ENCODE measurements at regions of chr5 and their contacts with region 1.

Region 1: DNA sequence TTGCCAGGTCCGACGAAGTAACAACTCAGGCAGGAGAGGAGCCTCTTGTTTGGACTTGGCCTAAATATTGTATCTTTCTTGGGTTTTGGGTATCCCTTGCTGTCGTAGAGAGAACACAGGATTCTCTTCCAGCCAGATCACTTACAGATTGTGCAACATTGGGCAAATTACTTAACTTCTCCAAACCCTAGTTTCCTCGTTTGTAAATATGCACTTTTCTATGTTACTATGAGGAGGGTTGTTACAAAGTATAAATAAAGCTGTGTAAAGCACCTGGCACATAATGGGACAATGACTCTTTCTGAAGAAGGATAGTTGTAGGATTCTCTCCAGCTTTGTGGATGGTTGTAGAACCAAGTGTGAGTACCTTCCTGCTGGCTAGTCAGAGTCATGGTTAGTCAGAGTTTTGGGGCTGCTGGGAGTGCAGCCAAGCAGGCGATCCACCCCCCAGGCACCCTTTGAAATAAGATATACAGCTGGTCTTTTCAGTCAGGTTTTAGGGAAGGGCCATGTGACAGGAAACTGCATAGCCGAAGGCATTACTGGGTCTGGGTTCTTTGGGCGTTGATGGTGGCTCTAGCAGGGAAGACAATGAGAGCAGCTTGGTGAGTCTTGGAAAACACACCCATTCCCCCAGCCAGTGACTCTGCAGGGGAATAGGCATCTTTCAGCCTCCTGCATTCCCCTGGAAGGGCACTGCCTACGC is 49.9 kb upstream of the GDNF start:
- DNase-seq: peak; percentile 99
- H3K4me3 ChIP-seq: no peak overlapping the region
- H3K27ac ChIP-seq: peak overlapping the region; percentile 81
- H3K4me1 ChIP-seq: peaks cover 31% of the 10 kb centered on the region
- H3K27me3 ChIP-seq: no peaks in the 10 kb centered on the region
- CTCF ChIP-seq: no peak

Region 2: DNA sequence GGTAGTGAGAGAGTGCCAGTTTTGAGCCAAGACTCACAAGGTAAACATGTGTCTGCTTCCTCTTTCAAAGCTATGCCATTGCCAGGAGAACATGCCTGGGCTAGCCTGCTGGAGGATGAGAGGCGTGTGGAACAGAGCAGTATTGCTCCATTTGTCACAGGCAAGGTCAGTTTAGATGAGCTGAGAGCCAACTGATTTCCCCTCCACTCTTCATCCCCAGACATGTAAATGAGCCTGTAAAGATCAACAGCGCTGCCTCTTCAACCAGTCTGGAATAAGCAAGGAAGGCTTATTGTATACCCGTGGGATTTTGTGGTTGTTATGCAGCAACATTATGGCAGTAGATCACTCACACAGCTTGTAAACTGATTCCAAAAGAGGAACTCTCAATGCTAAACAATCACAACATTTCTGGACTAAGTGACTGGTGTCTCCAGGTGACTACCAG is 41.8 kb before region 1 on chr5:
- CTCF ChIA-PET with region 1: no interaction called
- dilution Hi-C with region 1: no loop called
- in situ Hi-C with region 1: no loop called
- intact Hi-C with region 1: loop called (anchors 2 kb)
- DNase-seq: peak; percentile 94
- H3K4me3 ChIP-seq: no peak overlapping the region
- H3K27ac ChIP-seq: peak overlapping the region; percentile 52
- H3K4me1 ChIP-seq: peaks cover 32% of the 10 kb centered on the region
- H3K27me3 ChIP-seq: no peaks in the 10 kb centered on the region
- CTCF ChIP-seq: no peak

Region 3: GRCh38 chr5:37875051-37875787 is 14.5 kb before region 1 on chr5:
- CTCF ChIA-PET with region 1: no interaction called
- dilution Hi-C with region 1: no loop called
- in situ Hi-C with region 1: no loop called
- intact Hi-C with region 1: loop called (anchors 1 kb)
- DNase-seq: peak; percentile 81
- H3K4me3 ChIP-seq: no peak overlapping the region
- H3K27ac ChIP-seq: peak overlapping the region; percentile 2
- H3K4me1 ChIP-seq: peaks cover 10% of the 10 kb centered on the region
- H3K27me3 ChIP-seq: no peaks in the 10 kb centered on the region
- CTCF ChIP-seq: no peak

Region 4: DNA sequence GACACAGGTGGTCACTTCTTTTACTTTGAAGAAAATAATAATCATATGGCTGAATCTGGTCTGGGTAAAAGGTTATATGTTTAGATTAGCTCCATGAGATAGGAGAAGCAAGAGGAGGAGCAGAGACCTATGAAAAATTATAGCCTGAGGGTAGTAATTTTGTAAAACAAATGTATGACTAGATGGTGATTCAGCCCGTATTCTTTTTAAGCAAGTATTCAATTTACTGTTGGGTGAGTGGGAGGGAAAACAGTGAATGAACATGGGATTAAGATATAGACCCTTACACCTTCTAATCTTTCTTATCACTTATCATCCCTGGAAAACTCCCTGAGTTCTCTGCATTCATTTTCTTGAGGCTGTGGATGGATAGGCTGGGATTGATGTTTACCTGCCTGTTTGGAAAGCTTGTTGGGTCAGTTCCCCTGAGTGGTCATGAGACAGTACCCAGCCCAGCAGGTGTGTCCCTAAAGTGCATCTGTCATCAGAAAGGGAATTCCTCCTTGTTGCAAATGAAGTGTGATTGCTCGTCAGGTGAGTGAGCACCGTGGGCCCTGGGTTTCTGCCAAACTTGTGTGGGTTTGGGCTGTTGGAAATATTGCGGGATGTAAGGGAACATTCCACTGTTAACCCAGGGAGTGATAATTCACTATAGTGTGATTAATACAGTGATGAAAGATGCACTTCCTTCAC is 51.3 kb after region 1 on chr5:
- CTCF ChIA-PET with region 1: no interaction called
- dilution Hi-C with region 1: no loop called
- in situ Hi-C with region 1: no loop called
- intact Hi-C with region 1: loop called (anchors 1 kb)
- DNase-seq: peak; percentile 93
- H3K4me3 ChIP-seq: no peak overlapping the region
- H3K27ac ChIP-seq: peak overlapping the region; percentile 60
- H3K4me1 ChIP-seq: peaks cover 23% of the 10 kb centered on the region
- H3K27me3 ChIP-seq: no peaks in the 10 kb centered on the region
- CTCF ChIP-seq: no peak

Region 5: DNA sequence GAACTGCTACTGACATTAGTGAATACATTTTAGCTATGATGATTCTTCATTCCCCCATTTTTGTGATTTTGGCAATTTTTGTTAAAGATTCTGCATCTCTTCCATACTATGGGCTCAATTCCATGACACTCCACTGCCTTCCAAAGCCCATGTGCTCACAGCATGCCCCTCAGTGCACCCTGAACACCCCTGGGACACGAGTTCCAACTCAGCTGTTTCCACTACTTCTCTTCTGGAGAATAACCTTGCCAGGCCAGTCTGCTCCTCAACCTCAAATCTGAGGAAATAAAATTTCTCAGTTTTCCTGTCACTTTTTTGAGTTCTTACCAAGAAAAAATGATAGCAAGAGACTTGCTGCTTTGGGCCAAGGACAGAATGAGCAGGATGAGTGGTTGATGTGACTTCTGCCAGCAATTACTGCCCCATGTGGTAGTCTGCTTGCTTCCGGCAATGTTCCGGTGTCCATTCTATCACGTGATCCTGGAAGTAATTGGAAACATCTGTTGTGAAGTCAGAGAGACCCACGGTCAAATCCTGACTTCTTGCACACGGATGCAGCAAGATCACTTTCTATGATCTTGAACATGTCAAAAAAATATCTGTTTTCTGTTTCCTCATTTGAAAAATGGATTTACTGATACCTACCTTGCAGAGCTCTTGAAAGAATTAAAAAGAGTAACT is 426.9 kb after region 1 on chr5:
- CTCF ChIA-PET with region 1: no interaction called
- dilution Hi-C with region 1: no loop called
- in situ Hi-C with region 1: no loop called
- intact Hi-C with region 1: no loop called
- DNase-seq: no peak
- H3K4me3 ChIP-seq: no peak overlapping the region
- H3K27ac ChIP-seq: no peak overlapping the region
- H3K4me1 ChIP-seq: no peaks in the 10 kb centered on the region
- H3K27me3 ChIP-seq: peaks cover 2% of the 10 kb centered on the region
- CTCF ChIP-seq: no peak